ENCODE measurements at regions of chr7 and their contacts with region 1.

Region 1: GRCh38 chr7:139407555-139407954 is 47.9 kb downstream of the LUC7L2 start:
- DNase-seq: no peak
- H3K4me3 ChIP-seq: no peak overlapping the region
- H3K27ac ChIP-seq: no peak overlapping the region
- H3K4me1 ChIP-seq: no peaks in the 10 kb centered on the region
- CTCF ChIP-seq: no peak

Region 2: DNA sequence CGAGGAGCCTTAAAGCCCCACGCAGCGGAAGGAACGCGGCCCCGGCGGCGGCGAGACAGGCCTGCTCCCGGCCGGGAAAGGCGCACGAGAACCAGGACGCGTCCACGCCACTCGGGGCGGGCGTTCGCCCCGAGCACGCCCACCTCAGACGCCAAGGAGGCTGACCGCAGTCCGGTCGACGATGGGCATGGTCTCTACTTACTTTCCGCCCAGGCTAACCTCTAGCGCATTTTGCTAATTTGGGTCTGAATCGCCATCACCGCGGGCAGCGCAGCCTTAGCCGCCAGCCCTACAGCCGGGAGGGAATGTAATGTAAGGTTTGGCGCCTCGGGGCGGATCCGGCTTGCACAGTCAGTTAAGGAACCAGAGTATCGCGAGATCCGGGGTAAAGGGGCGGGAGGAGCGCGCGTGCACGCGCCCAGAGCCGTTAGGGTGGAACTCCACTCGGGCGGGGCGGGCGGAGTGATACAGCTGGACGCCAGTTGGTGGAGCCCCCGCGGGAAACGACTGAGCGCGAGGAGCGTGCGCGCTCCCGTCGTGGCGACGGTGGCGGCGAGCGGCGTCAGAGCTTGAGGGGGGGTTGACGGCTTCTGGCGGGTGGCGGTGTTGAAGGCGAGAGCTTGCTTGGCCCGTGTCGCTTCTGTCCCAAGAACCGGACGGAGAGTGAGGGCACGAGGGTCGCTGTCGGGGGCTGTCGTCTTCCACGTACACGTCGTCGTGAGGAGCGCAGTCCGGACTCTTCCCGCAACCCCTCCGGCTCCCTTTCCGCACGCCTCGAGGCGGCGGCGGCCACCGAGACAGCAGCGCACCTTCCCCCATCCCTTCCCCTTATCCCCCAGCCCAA is 48.0 kb before region 1 on chr7 and contains the start of gene LUC7L2:
- CTCF ChIA-PET with region 1: no interaction called
- POLR2A ChIA-PET with region 1: no interaction called
- intact Hi-C with region 1: no loop called
- DNase-seq: peak; percentile 99
- H3K4me3 ChIP-seq: peak within 1 kb of the TSS; percentile 90
- H3K27ac ChIP-seq: peak within 1 kb of the TSS; percentile 93
- H3K4me1 ChIP-seq: peaks cover 30% of the 10 kb centered on the region
- CTCF ChIP-seq: 0 out of 2 replicates have a peak, but pooled peaks have one; percentile 26
- total RNA-seq, gene LUC7L2: 79.6 and 94.9 TPM in 2 replicates

Region 3: GRCh38 chr7:139393621-139394211 is 13.8 kb before region 1 on chr7:
- CTCF ChIA-PET with region 1: no interaction called
- POLR2A ChIA-PET with region 1: interaction called, 11 read pairs
- intact Hi-C with region 1: no loop called
- DNase-seq: no peak
- H3K4me3 ChIP-seq: no peak overlapping the region
- H3K27ac ChIP-seq: no peak overlapping the region
- H3K4me1 ChIP-seq: no peaks in the 10 kb centered on the region
- CTCF ChIP-seq: no peak

Measured in OCI-LY7 (cell line).